Activated CD4-positive, alpha-beta memory T cell treated with anti-CD3 and anti-CD28 coated beads for 36 hours (primary cell): ENCODE measurements at regions of chr3 and their contacts with region 1.

Region 1: GRCh38 chr3:158845765-158846350 is 44.0 kb downstream of the MFSD1 start:
- DNase-seq: peak; percentile 33
- H3K4me3 Mint-ChIP-seq: no peak overlapping the region
- H3K27ac Mint-ChIP-seq: no peak overlapping the region
- H3K4me1 Mint-ChIP-seq: no peaks in the 10 kb centered on the region
- H3K27me3 Mint-ChIP-seq: no peaks in the 10 kb centered on the region

Region 2: DNA sequence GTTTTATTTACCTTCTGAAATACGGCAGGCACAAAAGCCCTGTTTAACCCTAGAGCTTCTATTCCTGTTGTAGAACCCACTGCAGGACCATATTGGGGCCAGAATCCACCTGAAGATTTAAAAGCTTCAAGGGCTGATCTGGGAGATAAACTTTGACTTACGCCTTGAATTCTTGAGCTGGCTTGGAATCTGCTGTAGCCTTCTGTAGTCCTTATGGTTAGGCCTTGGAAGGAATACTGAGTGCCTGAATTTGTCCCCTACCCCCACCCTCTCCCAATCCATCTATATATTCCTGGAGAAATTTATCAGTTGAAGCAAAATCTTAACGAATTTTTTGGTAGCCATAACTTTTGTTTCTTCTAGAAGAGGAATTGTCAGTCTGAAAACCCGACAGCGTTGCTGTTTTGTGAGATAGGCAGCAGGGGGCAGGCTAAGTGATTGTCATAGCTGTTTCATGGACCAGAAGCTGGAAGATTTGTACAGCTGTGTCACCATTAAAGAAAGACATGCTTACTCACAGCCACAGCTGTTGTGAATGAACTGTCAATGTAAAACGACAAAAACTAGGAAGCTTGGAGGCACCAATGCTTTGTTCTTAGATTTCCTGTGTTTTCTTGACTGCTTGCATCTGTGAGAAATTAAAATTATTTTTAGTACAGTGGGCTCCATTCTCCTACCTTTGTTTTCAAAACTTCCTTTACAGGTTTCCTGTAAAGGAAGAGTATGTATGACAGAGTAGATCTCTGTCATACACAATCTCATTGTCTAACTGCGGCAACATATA is 186.2 kb before region 1 on chr3:
- CTCF ChIA-PET with region 1: no interaction called
- POLR2A ChIA-PET with region 1: no interaction called
- intact Hi-C with region 1: no loop called
- DNase-seq: peak; percentile 72
- H3K4me3 Mint-ChIP-seq: no peak overlapping the region
- H3K27ac Mint-ChIP-seq: no peak overlapping the region
- H3K4me1 Mint-ChIP-seq: peaks cover 5% of the 10 kb centered on the region
- H3K27me3 Mint-ChIP-seq: no peaks in the 10 kb centered on the region

Region 3: GRCh38 chr3:158768361-158768787 is 77.5 kb before region 1 on chr3:
- CTCF ChIA-PET with region 1: no interaction called
- POLR2A ChIA-PET with region 1: no interaction called
- intact Hi-C with region 1: no loop called
- DNase-seq: no peak
- H3K4me3 Mint-ChIP-seq: no peak overlapping the region
- H3K27ac Mint-ChIP-seq: no peak overlapping the region
- H3K4me1 Mint-ChIP-seq: no peaks in the 10 kb centered on the region
- H3K27me3 Mint-ChIP-seq: no peaks in the 10 kb centered on the region

Region 4: GRCh38 chr3:158863247-158863646 is 17.4 kb after region 1 on chr3:
- CTCF ChIA-PET with region 1: interaction called, 11 read pairs
- POLR2A ChIA-PET with region 1: no interaction called
- intact Hi-C with region 1: no loop called
- DNase-seq: no peak
- H3K4me3 Mint-ChIP-seq: no peak overlapping the region
- H3K27ac Mint-ChIP-seq: no peak overlapping the region
- H3K4me1 Mint-ChIP-seq: no peaks in the 10 kb centered on the region
- H3K27me3 Mint-ChIP-seq: no peaks in the 10 kb centered on the region

Region 5: GRCh38 chr3:159252772-159253384 is 407.0 kb after region 1 on chr3:
- CTCF ChIA-PET with region 1: interaction called, 90 read pairs
- POLR2A ChIA-PET with region 1: no interaction called
- intact Hi-C with region 1: no loop called
- DNase-seq: no peak
- H3K4me3 Mint-ChIP-seq: no peak overlapping the region
- H3K27ac Mint-ChIP-seq: no peak overlapping the region
- H3K4me1 Mint-ChIP-seq: no peaks in the 10 kb centered on the region
- H3K27me3 Mint-ChIP-seq: peaks cover 4% of the 10 kb centered on the region